ENCODE measurements at regions of chr11 and their contacts with region 1.

Region 1: GRCh38 chr11:109946322-109946846 is 146.8 kb upstream of the ZC3H12C start:
- DNase-seq: peak; percentile 93
- H3K4me3 Mint-ChIP-seq: peak overlapping the region; percentile 66
- H3K27ac Mint-ChIP-seq: peak overlapping the region; percentile 90
- H3K4me1 Mint-ChIP-seq: peaks cover 13% of the 10 kb centered on the region
- H3K27me3 Mint-ChIP-seq: no peaks in the 10 kb centered on the region
- CTCF ChIP-seq: peak; percentile 85

Region 2: GRCh38 chr11:110098645-110099044 is 152.3 kb after region 1 on chr11:
- CTCF ChIA-PET with region 1: interaction called, 10 read pairs
- POLR2A ChIA-PET with region 1: interaction called, 148 read pairs
- intact Hi-C with region 1: loop called (anchors 1 kb)
- DNase-seq: no peak
- H3K4me3 Mint-ChIP-seq: no peak overlapping the region
- H3K27ac Mint-ChIP-seq: peak overlapping the region; percentile 31
- H3K4me1 Mint-ChIP-seq: peaks cover 39% of the 10 kb centered on the region
- H3K27me3 Mint-ChIP-seq: no peaks in the 10 kb centered on the region
- CTCF ChIP-seq: no peak

Region 3: DNA sequence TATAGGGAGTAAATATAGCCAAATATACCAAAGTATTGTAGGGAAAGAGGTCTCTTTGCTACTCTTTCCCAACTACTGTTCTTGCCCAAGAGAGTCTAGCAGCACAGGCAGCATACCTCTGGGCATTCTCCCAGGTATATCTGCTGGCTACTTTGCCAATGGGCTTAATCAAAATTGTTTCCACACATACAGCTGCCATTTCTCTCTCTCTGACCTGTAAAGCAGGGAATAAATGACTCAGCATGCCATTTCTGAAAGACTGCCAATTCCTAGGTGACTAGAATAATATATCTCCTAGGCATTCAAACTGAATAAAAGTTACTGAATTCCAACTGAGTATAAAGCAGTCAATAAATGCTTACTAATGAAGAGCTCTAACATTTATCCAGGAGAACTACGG is 305.5 kb after region 1 on chr11:
- CTCF ChIA-PET with region 1: no interaction called
- POLR2A ChIA-PET with region 1: interaction called, 3 read pairs
- intact Hi-C with region 1: loop called (anchors 1 kb)
- DNase-seq: peak; percentile 97
- H3K4me3 Mint-ChIP-seq: peak overlapping the region; percentile 38
- H3K27ac Mint-ChIP-seq: peak overlapping the region; percentile 74
- H3K4me1 Mint-ChIP-seq: peaks cover 15% of the 10 kb centered on the region
- H3K27me3 Mint-ChIP-seq: no peaks in the 10 kb centered on the region
- CTCF ChIP-seq: no peak

Region 4: DNA sequence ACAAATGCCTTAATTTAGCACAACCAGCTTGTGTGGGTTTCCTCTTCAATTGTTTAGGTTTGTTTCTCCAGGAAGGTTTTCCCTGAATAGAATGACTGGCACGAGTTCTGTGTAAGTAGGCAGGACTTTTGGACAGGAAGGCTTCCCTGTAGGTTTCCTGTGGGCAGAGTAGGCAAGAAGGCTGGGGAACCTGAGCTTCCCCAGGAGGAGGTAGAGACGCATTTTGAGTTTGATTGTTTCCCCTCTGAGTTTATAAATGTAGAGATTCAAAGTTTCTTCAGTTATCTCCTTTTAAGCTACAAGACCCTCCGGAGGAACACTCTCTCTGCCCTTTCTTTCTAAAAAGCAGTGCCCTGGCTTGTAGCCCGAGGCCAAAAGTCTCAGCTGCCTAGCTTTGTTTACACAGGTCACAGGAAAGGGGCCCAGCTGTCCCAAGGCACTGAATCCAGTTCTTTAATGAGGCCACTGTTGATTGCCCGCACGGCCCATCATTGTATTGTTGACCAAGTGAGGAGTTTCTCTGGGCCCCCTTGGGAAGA is 416.7 kb after region 1 on chr11:
- CTCF ChIA-PET with region 1: interaction called, 6 read pairs
- POLR2A ChIA-PET with region 1: no interaction called
- intact Hi-C with region 1: loop called (anchors 1 kb)
- DNase-seq: peak; percentile 32
- H3K4me3 Mint-ChIP-seq: no peak overlapping the region
- H3K27ac Mint-ChIP-seq: peak overlapping the region; percentile 89
- H3K4me1 Mint-ChIP-seq: peaks cover 16% of the 10 kb centered on the region
- H3K27me3 Mint-ChIP-seq: no peaks in the 10 kb centered on the region
- CTCF ChIP-seq: no peak

Region 5: GRCh38 chr11:110376711-110377324 is 430.4 kb after region 1 on chr11:
- CTCF ChIA-PET with region 1: no interaction called
- POLR2A ChIA-PET with region 1: no interaction called
- intact Hi-C with region 1: loop called (anchors 1 kb)
- DNase-seq: peak; percentile 84
- H3K4me3 Mint-ChIP-seq: no peak overlapping the region
- H3K27ac Mint-ChIP-seq: peak overlapping the region; percentile 61
- H3K4me1 Mint-ChIP-seq: peaks cover 16% of the 10 kb centered on the region
- H3K27me3 Mint-ChIP-seq: no peaks in the 10 kb centered on the region
- CTCF ChIP-seq: peak; percentile 52